Cardiac septum (tissue), 1 donor: ENCODE measurements at regions of chr4 and their contacts with region 1.

Region 1: GRCh38 chr4:13548984-13549546 is 4.8 kb upstream of the NKX3-2 start:
- DNase-seq: peak; percentile 90

Region 2: DNA sequence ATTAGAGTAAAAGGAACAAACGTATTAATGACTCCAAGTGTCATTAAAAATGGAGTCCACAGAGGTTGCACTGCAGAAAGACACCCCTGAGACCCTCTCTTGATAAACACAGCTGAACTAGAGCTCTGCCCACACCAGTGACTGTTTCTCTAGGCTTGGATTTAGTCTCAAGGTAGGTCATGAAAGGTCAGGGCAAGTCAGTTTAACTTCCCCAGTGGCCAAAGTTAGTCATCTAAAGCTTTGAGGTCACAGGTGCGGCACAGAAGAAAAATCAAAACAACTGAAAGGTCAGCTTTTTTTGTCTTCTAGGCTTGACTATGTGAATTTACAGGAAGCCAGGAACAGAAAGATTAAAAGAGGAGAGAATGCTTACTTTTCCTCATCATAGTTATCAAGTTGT is 814.5 kb before region 1 on chr4:
- intact Hi-C with region 1: loop called (anchors 5 kb)
- DNase-seq: no peak

Region 3: GRCh38 chr4:12852338-12853307 is 696.4 kb before region 1 on chr4:
- intact Hi-C with region 1: loop called (anchors 1 kb)
- DNase-seq: no peak

Region 4: DNA sequence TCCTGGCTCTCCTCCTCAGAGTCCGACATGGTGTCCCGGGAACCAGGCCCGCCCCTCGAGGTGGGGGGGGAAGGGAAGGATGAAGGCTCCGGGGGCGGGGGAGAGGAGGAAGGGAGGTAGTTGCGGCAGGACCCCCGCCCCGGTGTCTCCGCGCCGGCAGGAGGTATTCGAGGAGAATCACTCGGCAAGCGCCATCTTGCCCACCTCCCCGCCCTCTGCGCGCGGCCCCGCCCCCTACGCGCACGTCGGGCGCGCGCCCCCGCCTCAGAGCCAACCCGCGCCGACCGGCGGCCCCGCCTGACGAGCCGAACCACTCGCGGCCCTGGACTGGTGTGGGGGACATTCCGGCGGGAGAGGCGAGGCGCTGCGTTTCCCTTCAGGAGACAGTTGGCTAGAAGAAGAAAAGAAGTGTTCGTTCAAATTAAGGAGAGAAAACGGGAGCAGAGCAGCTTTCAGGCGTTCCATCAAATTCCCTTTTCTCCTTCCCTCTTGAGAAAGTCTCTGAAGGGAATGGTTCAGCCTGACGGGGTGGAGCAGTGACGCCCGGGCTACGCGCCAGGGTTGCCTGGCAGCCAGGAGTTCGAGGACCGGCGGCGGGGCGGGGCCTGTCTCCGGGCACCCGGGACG is 64.8 kb before region 1 on chr4 and contains the start of gene RAB28:
- intact Hi-C with region 1: loop called (anchors 2 kb)
- DNase-seq: peak; percentile 98
- total RNA-seq, gene RAB28: 25.9 TPM